Activated CD4-positive, alpha-beta T cell treated with anti-CD3 and anti-CD28 coated beads for 36 hours (primary cell): ENCODE measurements at regions of chr2 and their contacts with region 1.

Region 1: GRCh38 chr2:46915811-46916630 is 415 bp upstream of the MCFD2 start:
- DNase-seq: peak; percentile 87
- ATAC-seq: peak; percentile 89
- H3K4me3 Mint-ChIP-seq: peak overlapping the region; percentile 93
- H3K27ac Mint-ChIP-seq: peak overlapping the region; percentile 62
- H3K4me1 Mint-ChIP-seq: peaks cover 49% of the 10 kb centered on the region
- H3K27me3 Mint-ChIP-seq: no peaks in the 10 kb centered on the region

Region 2: DNA sequence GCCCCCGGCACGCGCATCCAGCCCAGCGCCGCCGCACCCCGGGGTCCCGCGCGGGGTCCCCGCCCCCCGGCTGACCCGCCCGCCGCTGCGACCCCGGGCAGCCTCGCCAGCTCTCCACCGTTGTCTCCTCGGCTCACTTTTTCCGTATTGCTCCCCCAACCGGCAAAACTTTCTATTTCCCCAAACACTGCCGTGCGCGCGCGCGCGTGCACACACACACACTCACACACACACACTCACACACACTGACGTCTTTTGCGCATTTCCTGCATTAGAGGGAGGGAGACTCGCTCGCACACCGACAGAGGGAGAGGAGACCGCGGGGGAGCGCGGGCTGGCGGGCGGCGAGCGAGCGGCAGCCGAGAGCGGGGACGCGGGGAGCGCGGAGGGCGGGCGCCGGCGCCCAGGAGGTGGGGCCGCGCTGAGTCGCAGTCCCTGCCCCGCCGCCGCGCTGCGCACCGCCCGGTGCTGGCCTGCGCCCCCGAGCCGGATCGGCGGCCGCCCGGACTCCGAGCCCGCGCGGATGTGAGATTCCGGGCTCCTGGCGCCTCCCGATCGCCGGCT is 1265.1 kb before region 1 on chr2:
- CTCF ChIA-PET with region 1: no interaction called
- POLR2A ChIA-PET with region 1: no interaction called
- intact Hi-C with region 1: loop called in 1 of 2 experiments (anchors 10 kb)
- DNase-seq: peak; percentile 94
- ATAC-seq: peak; percentile 85
- H3K4me3 Mint-ChIP-seq: peak overlapping the region; percentile 87
- H3K27ac Mint-ChIP-seq: peak overlapping the region; percentile 96
- H3K4me1 Mint-ChIP-seq: peaks cover 27% of the 10 kb centered on the region
- H3K27me3 Mint-ChIP-seq: peaks cover 6% of the 10 kb centered on the region

Region 3: GRCh38 chr2:45904267-45904945 is 1011.6 kb before region 1 on chr2:
- CTCF ChIA-PET with region 1: no interaction called
- POLR2A ChIA-PET with region 1: no interaction called
- intact Hi-C with region 1: no loop called
- DNase-seq: peak; percentile 66
- ATAC-seq: peak; percentile 96
- H3K4me3 Mint-ChIP-seq: no peak overlapping the region
- H3K27ac Mint-ChIP-seq: peak overlapping the region; percentile 52
- H3K4me1 Mint-ChIP-seq: peaks cover 11% of the 10 kb centered on the region
- H3K27me3 Mint-ChIP-seq: no peaks in the 10 kb centered on the region

Region 4: GRCh38 chr2:46690825-46691224 is 225.2 kb before region 1 on chr2:
- CTCF ChIA-PET with region 1: no interaction called
- POLR2A ChIA-PET with region 1: no interaction called
- intact Hi-C with region 1: no loop called
- DNase-seq: no peak
- ATAC-seq: no peak
- H3K4me3 Mint-ChIP-seq: no peak overlapping the region
- H3K27ac Mint-ChIP-seq: no peak overlapping the region
- H3K4me1 Mint-ChIP-seq: no peaks in the 10 kb centered on the region
- H3K27me3 Mint-ChIP-seq: peaks cover 3% of the 10 kb centered on the region

Region 5: DNA sequence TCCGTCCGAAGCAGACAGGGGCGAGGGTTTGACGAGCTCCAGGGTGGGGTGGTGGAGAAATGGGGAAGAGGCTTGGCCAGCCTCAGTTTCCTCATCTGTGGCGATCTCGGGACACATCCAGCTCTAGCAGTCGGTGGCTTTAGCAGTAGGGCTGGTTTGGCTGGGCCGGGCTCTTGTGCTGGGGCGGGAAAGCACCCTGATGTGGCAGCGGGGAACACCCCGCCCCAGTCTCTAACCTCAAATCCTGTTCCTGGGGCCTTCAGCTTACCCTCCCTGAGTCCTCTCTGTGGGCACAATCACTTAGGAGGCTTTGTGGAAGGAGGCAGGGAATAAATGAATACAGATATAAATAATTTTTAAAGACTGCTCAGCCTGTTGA is 26.1 kb after region 1 on chr2:
- CTCF ChIA-PET with region 1: interaction called, 47 read pairs
- POLR2A ChIA-PET with region 1: interaction called, 8 read pairs
- intact Hi-C with region 1: loop called in 1 of 2 experiments (anchors 1 kb)
- DNase-seq: peak; percentile 85
- ATAC-seq: peak; percentile 42
- H3K4me3 Mint-ChIP-seq: peak overlapping the region; percentile 94
- H3K27ac Mint-ChIP-seq: peak overlapping the region; percentile 98
- H3K4me1 Mint-ChIP-seq: peaks cover 45% of the 10 kb centered on the region
- H3K27me3 Mint-ChIP-seq: no peaks in the 10 kb centered on the region

Region 6: GRCh38 chr2:47272031-47272864 is 356.2 kb after region 1 on chr2:
- CTCF ChIA-PET with region 1: no interaction called
- POLR2A ChIA-PET with region 1: no interaction called
- intact Hi-C with region 1: loop called (anchors 2 to 5 kb)
- DNase-seq: peak; percentile 75
- ATAC-seq: peak; percentile 96
- H3K4me3 Mint-ChIP-seq: peak overlapping the region; percentile 47
- H3K27ac Mint-ChIP-seq: no peak overlapping the region
- H3K4me1 Mint-ChIP-seq: peaks cover 1% of the 10 kb centered on the region
- H3K27me3 Mint-ChIP-seq: no peaks in the 10 kb centered on the region

Region 7: DNA sequence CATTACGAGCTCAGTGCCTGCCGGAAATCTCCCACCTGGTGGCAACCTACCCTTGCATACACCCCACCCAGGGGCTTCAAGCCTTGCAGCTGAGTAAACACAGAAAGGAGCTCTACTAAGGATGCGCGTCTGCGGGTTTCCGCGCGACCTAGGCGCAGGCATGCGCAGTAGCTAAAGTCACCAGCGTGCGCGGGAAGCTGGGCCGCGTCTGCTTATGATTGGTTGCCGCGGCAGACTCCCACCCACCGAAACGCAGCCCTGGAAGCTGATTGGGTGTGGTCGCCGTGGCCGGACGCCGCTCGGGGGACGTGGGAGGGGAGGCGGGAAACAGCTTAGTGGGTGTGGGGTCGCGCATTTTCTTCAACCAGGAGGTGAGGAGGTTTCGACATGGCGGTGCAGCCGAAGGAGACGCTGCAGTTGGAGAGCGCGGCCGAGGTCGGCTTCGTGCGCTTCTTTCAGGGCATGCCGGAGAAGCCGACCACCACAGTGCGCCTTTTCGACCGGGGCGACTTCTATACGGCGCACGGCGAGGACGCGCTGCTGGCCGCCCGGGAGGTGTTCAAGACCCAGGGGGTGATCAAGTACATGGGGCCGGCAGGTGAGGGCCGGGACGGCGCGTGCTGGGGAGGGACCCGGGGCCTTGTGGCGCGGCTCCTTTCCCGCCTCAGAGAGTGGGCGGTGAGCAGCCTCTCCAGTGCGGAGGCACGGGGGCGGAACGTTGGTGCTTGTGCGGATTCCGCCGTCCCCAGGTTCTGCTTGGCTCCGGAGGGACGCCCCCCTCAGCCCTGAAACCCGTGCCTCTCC is 487.0 kb after region 1 on chr2 and contains the start of gene MSH2:
- CTCF ChIA-PET with region 1: no interaction called
- POLR2A ChIA-PET with region 1: no interaction called
- intact Hi-C with region 1: loop called in 1 of 2 experiments (anchors 1 kb)
- DNase-seq: peak; percentile 96
- ATAC-seq: peak; percentile 95
- H3K4me3 Mint-ChIP-seq: peak within 1 kb of the TSS; percentile 84
- H3K27ac Mint-ChIP-seq: peak within 1 kb of the TSS; percentile 98
- H3K4me1 Mint-ChIP-seq: peaks cover 35% of the 10 kb centered on the region
- H3K27me3 Mint-ChIP-seq: no peaks in the 10 kb centered on the region
- total RNA-seq, gene MSH2: 61.0 to 65.2 TPM

Region 8: GRCh38 chr2:47906157-47907038 is 990.4 kb after region 1 on chr2 and contains the start of gene FBXO11:
- CTCF ChIA-PET with region 1: no interaction called
- POLR2A ChIA-PET with region 1: no interaction called
- intact Hi-C with region 1: loop called in 1 of 2 experiments (anchors 10 kb)
- DNase-seq: peak; percentile 97
- ATAC-seq: peak; percentile 85
- H3K4me3 Mint-ChIP-seq: peak within 1 kb of the TSS; percentile 95
- H3K27ac Mint-ChIP-seq: peak within 1 kb of the TSS; percentile 98
- H3K4me1 Mint-ChIP-seq: peaks cover 25% of the 10 kb centered on the region
- H3K27me3 Mint-ChIP-seq: no peaks in the 10 kb centered on the region
- total RNA-seq, gene FBXO11: 33.0 to 40.3 TPM